ENCODE measurements at regions of chr21 and their contacts with region 1.

Region 1: DNA sequence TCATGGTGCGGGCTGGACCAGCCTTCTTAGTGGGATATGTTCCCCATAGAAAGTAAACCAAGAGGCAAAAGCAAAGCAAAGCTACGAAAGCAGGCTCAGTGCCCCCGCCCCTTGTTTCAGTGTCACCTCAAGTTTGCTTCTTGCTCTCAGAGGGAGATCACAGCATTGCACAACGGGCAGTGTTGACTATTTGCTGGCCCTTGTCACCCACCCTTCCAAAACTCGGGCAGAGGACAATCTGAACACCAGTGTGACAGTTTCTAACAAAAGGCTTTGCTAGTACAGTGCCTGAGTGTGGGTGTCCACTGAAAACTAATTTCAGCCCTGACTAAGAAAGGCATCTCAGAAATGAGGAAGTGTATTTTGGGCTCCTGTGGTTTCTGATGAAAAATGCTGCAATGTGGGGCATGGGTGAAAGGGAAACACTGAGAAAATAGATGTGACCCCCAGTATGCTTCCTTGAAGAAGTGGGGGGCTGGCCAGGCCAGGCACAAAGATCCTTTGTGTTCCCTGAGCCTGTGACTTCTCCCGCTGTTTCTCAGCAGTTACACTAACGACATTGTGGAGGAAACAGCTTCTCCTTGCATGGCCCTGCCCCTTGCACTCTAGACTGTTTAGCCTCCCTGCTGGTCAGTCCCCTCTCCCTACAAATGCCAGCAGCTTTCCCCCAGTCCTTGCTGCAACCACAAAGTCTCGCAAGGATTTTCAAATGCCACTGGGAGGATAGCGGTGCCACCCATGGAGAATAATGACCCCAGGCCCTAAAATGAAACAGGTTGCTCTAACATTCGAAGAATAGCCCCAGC is 33.3 kb upstream of the KCNE1 start:
- DNase-seq: peak; percentile 25
- H3K4me3 ChIP-seq: no peak overlapping the region
- H3K27ac ChIP-seq: peak overlapping the region; percentile 2
- H3K4me1 ChIP-seq: peaks cover 11% of the 10 kb centered on the region
- H3K27me3 ChIP-seq: no peaks in the 10 kb centered on the region
- CTCF ChIP-seq: no peak

Region 2: DNA sequence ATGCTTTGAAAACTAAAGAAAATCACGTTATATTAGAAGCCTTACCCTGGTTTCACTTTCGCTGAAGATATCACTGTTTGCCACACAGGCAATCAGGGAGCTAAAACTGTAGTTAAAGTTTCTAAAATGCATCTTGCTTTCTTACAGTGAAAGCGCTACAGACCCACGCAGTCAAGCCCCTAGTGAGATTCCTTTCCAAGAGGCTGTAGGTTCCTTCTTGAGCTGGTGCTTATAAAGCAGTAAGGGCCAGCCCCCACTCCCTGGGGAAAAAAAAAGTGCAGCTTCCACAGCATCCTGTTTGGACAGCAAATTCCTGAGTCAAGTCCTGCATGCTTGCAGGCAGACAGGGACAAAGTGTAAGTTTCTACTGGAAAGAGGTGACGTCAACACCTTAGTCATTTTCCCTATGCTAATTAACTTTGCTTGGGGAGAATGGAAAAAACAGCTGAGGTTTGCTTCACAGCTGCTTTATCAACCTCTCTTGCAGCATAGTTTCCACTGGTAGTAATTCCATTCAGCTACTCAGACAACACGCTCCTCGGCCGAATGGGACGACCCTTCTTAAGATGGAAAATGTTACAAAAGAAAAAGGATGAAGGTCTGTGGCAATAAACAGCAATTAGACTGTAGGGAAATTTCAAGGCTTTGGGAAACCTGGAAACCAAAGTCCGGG is 18.5 kb before region 1 on chr21:
- CTCF ChIA-PET with region 1: no interaction called
- dilution Hi-C with region 1: no loop called
- in situ Hi-C with region 1: no loop called
- intact Hi-C with region 1: loop called (anchors 1 kb)
- DNase-seq: peak; percentile 98
- H3K4me3 ChIP-seq: peak overlapping the region; percentile 51 to 81 (median 65)
- H3K27ac ChIP-seq: peak overlapping the region; percentile 99
- H3K4me1 ChIP-seq: peaks cover 18% of the 10 kb centered on the region
- H3K27me3 ChIP-seq: no peaks in the 10 kb centered on the region
- CTCF ChIP-seq: no peak

Region 3: GRCh38 chr21:34693192-34693810 is 148.0 kb after region 1 on chr21:
- CTCF ChIA-PET with region 1: no interaction called
- dilution Hi-C with region 1: no loop called
- in situ Hi-C with region 1: no loop called
- intact Hi-C with region 1: no loop called
- DNase-seq: peak; percentile 39
- H3K4me3 ChIP-seq: no peak overlapping the region
- H3K27ac ChIP-seq: no peak overlapping the region
- H3K4me1 ChIP-seq: peaks cover 6% of the 10 kb centered on the region
- H3K27me3 ChIP-seq: no peaks in the 10 kb centered on the region
- CTCF ChIP-seq: peak; percentile 83 to 92